ENCODE measurements at regions of chr3 and their contacts with region 1.

Region 1: DNA sequence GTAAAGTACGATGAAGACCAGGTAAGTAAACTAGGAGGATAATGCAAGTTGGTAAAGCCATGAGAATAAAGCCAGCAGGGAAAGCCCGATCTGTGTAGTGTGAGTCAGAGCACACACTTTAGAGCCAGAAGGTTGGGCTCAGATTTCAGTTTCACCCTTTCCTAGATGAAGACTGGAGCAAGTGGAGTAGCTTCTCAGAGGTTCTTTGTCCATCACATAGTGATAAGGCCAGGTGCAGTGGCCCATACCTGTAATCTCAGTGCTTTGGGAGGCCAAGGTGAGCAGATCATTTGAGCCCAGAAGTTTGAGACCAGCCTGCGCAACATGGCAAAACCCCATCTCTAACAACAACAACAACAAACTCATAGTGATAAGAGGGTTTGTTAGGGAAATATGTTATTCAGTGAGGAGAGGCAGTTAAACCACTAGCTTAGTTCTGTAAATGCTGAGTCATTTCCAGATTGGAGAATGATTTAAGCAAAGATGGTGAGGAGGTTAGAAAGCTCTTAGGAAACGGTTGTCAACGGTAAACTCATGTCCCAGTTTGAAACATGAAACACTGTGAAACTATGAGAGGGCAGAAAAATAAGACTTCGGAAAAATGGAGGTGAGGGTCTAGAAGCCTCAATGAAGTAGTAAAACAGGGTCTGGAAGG is 39.0 kb downstream of the IL12A start:
- DNase-seq: peak; percentile 41
- H3K4me3 Mint-ChIP-seq: peak overlapping the region; percentile 20
- H3K27ac Mint-ChIP-seq: peak overlapping the region; percentile 92
- H3K4me1 Mint-ChIP-seq: peaks cover 42% of the 10 kb centered on the region
- H3K27me3 Mint-ChIP-seq: no peaks in the 10 kb centered on the region

Region 2: GRCh38 chr3:160012108-160012507 is 15.6 kb before region 1 on chr3:
- intact Hi-C with region 1: loop called (anchors 1 kb)
- DNase-seq: no peak
- H3K4me3 Mint-ChIP-seq: no peak overlapping the region
- H3K27ac Mint-ChIP-seq: peak overlapping the region; percentile 63
- H3K4me1 Mint-ChIP-seq: peaks cover 55% of the 10 kb centered on the region
- H3K27me3 Mint-ChIP-seq: no peaks in the 10 kb centered on the region

Region 3: DNA sequence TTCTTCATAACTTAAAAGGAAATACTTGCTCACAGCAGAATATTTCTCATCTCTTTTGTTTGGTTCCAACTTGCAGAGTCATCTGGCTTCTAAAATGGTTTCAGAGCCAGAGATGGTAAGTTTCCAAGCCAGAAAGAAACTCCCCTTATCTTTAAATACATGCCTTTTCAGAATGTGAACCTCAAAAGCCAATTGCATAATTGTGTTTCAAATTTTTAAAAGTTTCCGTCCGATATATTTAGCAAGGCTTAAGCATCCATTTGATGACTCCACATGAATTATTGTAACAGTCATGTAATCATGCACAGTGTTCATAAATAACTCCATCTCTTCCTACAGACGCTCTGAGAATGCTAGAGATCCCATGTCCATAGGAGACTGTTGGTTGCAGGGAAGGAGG is 157.0 kb after region 1 on chr3:
- intact Hi-C with region 1: loop called (anchors 1 kb)
- DNase-seq: no peak
- H3K4me3 Mint-ChIP-seq: no peak overlapping the region
- H3K27ac Mint-ChIP-seq: no peak overlapping the region
- H3K4me1 Mint-ChIP-seq: peaks cover 5% of the 10 kb centered on the region
- H3K27me3 Mint-ChIP-seq: peaks cover 19% of the 10 kb centered on the region

Region 4: GRCh38 chr3:160343132-160343531 is 315.5 kb after region 1 on chr3:
- intact Hi-C with region 1: loop called (anchors 1 kb)
- DNase-seq: no peak
- H3K4me3 Mint-ChIP-seq: no peak overlapping the region
- H3K27ac Mint-ChIP-seq: no peak overlapping the region
- H3K4me1 Mint-ChIP-seq: no peaks in the 10 kb centered on the region
- H3K27me3 Mint-ChIP-seq: no peaks in the 10 kb centered on the region

Region 5: GRCh38 chr3:160413613-160414248 is 386.1 kb after region 1 on chr3:
- intact Hi-C with region 1: loop called (anchors 5 kb)
- DNase-seq: peak; percentile 60
- H3K4me3 Mint-ChIP-seq: no peak overlapping the region
- H3K27ac Mint-ChIP-seq: no peak overlapping the region
- H3K4me1 Mint-ChIP-seq: peaks cover 51% of the 10 kb centered on the region
- H3K27me3 Mint-ChIP-seq: no peaks in the 10 kb centered on the region

Region 6: DNA sequence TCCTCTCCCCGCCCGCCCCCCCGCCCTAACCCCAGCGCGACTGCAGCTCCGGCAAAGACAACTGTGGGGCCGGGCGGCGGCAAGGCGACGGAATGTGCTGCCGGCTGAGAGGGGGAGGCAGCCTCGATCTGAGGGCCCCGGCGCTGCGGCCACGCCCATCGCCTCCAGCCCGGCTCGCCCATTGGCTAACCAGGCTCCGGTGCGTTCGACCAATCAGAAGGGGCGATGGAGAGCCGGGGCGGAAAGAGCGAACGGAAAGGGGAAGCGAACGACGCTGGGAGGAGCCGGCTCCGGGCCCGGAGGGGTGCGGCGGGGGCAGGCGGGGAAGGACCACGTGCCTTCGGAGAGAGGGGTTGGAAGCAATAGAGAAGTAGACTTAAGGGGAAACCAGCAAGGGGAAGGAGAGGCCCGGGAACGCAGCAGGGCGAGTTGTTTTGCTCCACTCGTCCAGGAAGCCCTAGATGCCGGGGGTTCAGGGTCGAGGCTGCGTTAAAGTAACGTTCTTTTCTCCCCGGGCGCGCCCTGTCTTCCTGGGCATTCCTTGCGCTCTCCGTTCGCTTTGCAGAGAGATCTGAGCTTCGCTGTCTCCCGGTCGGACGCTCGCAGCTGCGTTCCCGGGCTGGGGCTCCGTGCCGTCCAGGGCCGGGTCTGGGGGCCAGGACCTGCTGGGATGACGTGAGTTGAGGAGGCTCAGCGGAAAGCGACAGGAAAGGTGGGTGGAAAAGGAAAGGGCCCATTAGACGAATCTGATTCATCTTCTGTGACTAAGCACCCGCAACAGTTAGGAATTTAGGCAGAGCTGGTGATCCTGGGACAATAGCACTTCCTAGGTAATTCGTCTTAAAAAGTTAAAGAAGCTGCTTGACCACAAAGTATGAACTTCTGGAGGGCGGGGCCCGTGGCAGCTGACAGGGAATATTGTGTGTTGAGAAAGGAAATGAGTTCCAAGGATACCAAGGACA is 538.1 kb after region 1 on chr3 and contains the start of gene KPNA4:
- intact Hi-C with region 1: loop called (anchors 10 kb)
- DNase-seq: peak; percentile 96
- H3K4me3 Mint-ChIP-seq: peak within 1 kb of the TSS; percentile 99
- H3K27ac Mint-ChIP-seq: peak within 1 kb of the TSS; percentile 96
- H3K4me1 Mint-ChIP-seq: peaks cover 61% of the 10 kb centered on the region
- H3K27me3 Mint-ChIP-seq: no peaks in the 10 kb centered on the region
- total RNA-seq, gene KPNA4: 69.8 and 71.2 TPM in 2 replicates

Measured in activated T-helper 2 cell treated with anti-CD3 and anti-CD28 coated beads, Interferon-gamma antibody, Interleukin-2, Interleukin-4, amounts not matched to agents 10 μg/mL and 5 μg/mL and 100 μg/mL, durations not matched to agents 14 hours and 24 hours and 36 hours (primary cell).